ENCODE measurements at regions of chr5 and their contacts with region 1.

Region 1: GRCh38 chr5:6632917-6633468 is at the starts of genes NSUN2 and SRD5A1:
- DNase-seq: peak; percentile 95
- H3K4me3 ChIP-seq: peak within 1 kb of the TSS; percentile 77 to 90 (median 82)
- H3K27ac ChIP-seq: peak within 1 kb of the TSS; percentile 86 to 96 (median 88)
- H3K4me1 ChIP-seq: peaks cover 0 to 37% (median 30%) of the 10 kb centered on the region in 4 donors
- H3K27me3 ChIP-seq: no peaks in the 10 kb centered on the region
- CTCF ChIP-seq: no peak
- EP300 ChIP-seq: no peak
- POLR2A ChIP-seq: peak; percentile 40 to 41
- total RNA-seq, gene NSUN2: 29.3 to 45.4 (median 31.2) TPM
- total RNA-seq, gene SRD5A1: 3.1 to 5.7 (median 3.6) TPM

Region 2: GRCh38 chr5:6408627-6409446 is 224.2 kb before region 1 on chr5:
- intact Hi-C with region 1: no loop called
- DNase-seq: no peak
- H3K4me3 ChIP-seq: no peak overlapping the region
- H3K27ac ChIP-seq: no peak overlapping the region
- H3K4me1 ChIP-seq: peaks cover 0 to 6% (median 0%) of the 10 kb centered on the region in 4 donors
- H3K27me3 ChIP-seq: no peaks in the 10 kb centered on the region
- CTCF ChIP-seq: no peak
- EP300 ChIP-seq: no peak
- POLR2A ChIP-seq: no peak

Region 3: DNA sequence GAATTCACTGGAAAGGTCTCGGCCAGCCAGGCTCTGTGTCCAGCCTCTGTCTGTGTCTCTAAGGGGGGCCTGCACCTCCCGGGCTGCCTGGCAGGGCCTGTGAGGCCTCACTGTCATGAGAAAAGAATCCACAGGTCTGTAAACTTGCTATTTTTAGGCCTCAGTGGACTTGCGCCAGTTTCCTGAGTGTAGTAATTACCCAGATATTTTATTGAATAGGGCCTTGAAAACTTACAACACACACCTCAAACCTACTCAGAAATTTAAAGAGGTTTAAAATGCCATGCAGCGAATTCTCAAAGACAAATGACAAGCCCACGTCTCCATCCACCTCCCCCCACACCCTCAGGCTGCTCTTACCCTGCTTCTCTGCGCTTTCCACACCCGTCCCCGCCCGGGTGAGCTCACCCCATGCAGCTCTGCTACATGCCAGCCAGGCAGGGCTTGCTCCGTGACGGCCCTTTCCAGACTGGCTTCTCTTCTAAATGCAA is 71.4 kb after region 1 on chr5:
- intact Hi-C with region 1: loop called (anchors 2 kb)
- DNase-seq: peak; percentile 95
- H3K4me3 ChIP-seq: no peak overlapping the region
- H3K27ac ChIP-seq: peak overlapping the region; percentile 81 to 85 (median 83)
- H3K4me1 ChIP-seq: peaks cover 0 to 32% (median 26%) of the 10 kb centered on the region in 4 donors
- H3K27me3 ChIP-seq: no peaks in the 10 kb centered on the region
- CTCF ChIP-seq: no peak
- EP300 ChIP-seq: peak; percentile 71 to 89 (median 78)
- POLR2A ChIP-seq: no peak

Region 4: GRCh38 chr5:6712577-6713275 is 79.7 kb after region 1 on chr5:
- intact Hi-C with region 1: loop called (anchors 1 kb)
- DNase-seq: peak; percentile 98
- H3K4me3 ChIP-seq: peak overlapping the region; percentile 69 to 78 (median 74)
- H3K27ac ChIP-seq: peak overlapping the region; percentile 92 to 98 (median 97)
- H3K4me1 ChIP-seq: peaks cover 0 to 44% (median 36%) of the 10 kb centered on the region in 4 donors
- H3K27me3 ChIP-seq: no peaks in the 10 kb centered on the region
- CTCF ChIP-seq: no peak
- EP300 ChIP-seq: no peak
- POLR2A ChIP-seq: no peak

Region 5: GRCh38 chr5:6745706-6746222 is 112.8 kb after region 1 on chr5:
- intact Hi-C with region 1: loop called (anchors 1 kb)
- DNase-seq: peak; percentile 18
- H3K4me3 ChIP-seq: no peak overlapping the region
- H3K27ac ChIP-seq: peak overlapping the region in 2 of 4 donors; percentile 24 to 61
- H3K4me1 ChIP-seq: peaks cover 0 to 6% (median 4%) of the 10 kb centered on the region in 4 donors
- H3K27me3 ChIP-seq: no peaks in the 10 kb centered on the region
- CTCF ChIP-seq: peak; percentile 53 to 79 (median 76)
- EP300 ChIP-seq: no peak
- POLR2A ChIP-seq: no peak

Region 6: GRCh38 chr5:6765612-6766525 is 132.9 kb after region 1 on chr5:
- intact Hi-C with region 1: no loop called
- DNase-seq: peak; percentile 77
- H3K4me3 ChIP-seq: no peak overlapping the region
- H3K27ac ChIP-seq: peak overlapping the region; percentile 36 to 62 (median 58)
- H3K4me1 ChIP-seq: peaks cover 0 to 16% (median 14%) of the 10 kb centered on the region in 4 donors
- H3K27me3 ChIP-seq: no peaks in the 10 kb centered on the region
- CTCF ChIP-seq: peak in 3 of 4 experiments; percentile 44 to 77 (median 58)
- EP300 ChIP-seq: no peak
- POLR2A ChIP-seq: no peak

Measured in sigmoid colon (tissue), 7 donors.